CD14-positive monocyte (primary cell): ENCODE measurements at regions of chr5 and their contacts with region 1.

Region 1: DNA sequence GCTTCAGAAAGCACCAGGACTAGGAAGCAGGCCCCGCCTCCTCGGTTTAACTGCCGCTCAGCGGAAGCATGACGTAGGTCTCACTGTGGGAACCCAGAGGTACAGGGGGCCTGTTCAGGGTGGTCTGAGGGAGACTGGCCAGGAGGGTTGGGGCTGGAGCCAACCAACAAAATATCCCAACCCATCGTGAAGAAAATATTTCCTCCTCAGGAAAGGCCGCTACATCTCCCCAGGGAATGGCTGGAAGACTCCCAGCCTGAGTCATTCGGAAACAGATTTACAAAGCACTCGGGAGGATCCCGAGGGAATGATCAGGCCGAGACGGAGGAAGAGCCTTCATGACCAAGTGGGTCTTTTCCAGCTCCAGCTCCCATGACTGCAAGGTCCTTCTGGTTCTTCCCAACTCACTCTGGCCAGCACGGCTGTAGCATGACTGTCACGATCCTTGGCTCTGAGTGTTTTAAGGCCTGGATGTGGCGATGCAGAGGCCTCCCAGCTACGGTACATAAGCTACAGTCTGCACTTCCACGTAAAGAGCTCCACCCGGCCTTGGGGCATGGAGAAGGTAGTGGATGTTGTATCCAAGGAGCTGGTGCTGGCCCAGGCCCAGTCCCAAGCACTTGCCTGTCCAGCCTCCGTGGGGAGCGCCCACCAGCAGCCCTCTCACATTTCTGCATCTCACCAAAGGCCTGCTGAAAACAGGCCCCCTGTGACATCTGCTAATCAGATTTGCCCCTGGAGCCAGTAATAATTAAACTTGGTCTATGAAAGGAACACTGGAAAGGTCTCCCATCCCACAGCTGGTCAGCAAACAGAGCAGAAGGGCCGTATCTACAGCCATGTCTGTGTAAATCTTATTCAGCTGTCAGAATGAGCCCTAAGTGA is 100.6 kb downstream of the LHFPL2 start:
- DNase-seq: no peak
- H3K4me3 ChIP-seq: peak overlapping the region in 2 of 3 experiments; percentile 38 to 68
- H3K4me3 Mint-ChIP-seq: peak overlapping the region; percentile 73 to 87
- H3K27ac ChIP-seq: peak overlapping the region; percentile 89 to 91
- H3K27ac Mint-ChIP-seq: peak overlapping the region; percentile 91 to 96 (median 95)
- H3K4me1 ChIP-seq: peaks cover 43 to 46% of the 10 kb centered on the region in 2 donors
- H3K4me1 Mint-ChIP-seq: peaks cover 50% of the 10 kb centered on the region
- H3K27me3 ChIP-seq: no peaks in the 10 kb centered on the region
- H3K27me3 Mint-ChIP-seq: peaks cover 0 to 4% (median under 1%) of the 10 kb centered on the region in 3 donors
- CTCF ChIP-seq: no peak

Region 2: GRCh38 chr5:78586251-78586650 is 38.3 kb after region 1 on chr5:
- intact Hi-C with region 1: loop called in 1 of 2 experiments (anchors 5 kb)
- DNase-seq: peak; percentile 36 to 85 (median 73)
- H3K4me3 ChIP-seq: no peak overlapping the region
- H3K4me3 Mint-ChIP-seq: no peak overlapping the region
- H3K27ac ChIP-seq: no peak overlapping the region
- H3K27ac Mint-ChIP-seq: peak overlapping the region in 2 of 7 donors; percentile 46 to 82
- H3K4me1 ChIP-seq: peaks cover 29 to 38% of the 10 kb centered on the region in 2 donors
- H3K4me1 Mint-ChIP-seq: peaks cover 42% of the 10 kb centered on the region
- H3K27me3 ChIP-seq: no peaks in the 10 kb centered on the region
- H3K27me3 Mint-ChIP-seq: peaks cover 0 to 3% (median 0%) of the 10 kb centered on the region in 3 donors
- CTCF ChIP-seq: no peak